ENCODE measurements at regions of chr7 and their contacts with region 1.

Region 1: GRCh38 chr7:143008007-143008901 is 18.7 kb downstream of the OR9A2 start:
- DNase-seq: peak; percentile 71 to 92 (median 89)
- ATAC-seq: peak; percentile 89 to 93
- H3K4me3 ChIP-seq: no peak overlapping the region
- H3K27ac ChIP-seq: no peak overlapping the region
- H3K4me1 ChIP-seq: no peaks in the 10 kb centered on the region
- H3K27me3 ChIP-seq: no peaks in the 10 kb centered on the region

Region 2: DNA sequence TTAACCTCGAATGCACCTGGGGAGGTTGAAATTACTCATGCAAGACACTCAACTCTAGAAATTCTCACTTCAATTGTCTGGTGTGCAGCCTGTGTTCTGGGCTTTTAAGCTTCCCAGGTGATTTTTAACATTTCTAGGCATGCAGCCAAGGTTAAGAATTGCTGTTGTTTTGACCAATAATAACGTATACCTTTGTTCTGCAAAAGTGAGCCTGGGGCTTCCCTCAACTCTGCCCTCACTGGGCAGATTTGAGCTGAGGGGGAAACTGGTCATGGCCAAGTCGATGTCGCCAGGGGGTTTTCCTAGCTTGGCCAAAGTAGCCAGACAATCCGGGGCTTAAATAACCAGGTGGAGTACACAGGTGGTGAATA is 236.9 kb before region 1 on chr7:
- intact Hi-C with region 1: no loop called
- DNase-seq: no peak
- ATAC-seq: no peak
- H3K4me3 ChIP-seq: no peak overlapping the region
- H3K27ac ChIP-seq: no peak overlapping the region
- H3K4me1 ChIP-seq: no peaks in the 10 kb centered on the region
- H3K27me3 ChIP-seq: no peaks in the 10 kb centered on the region

Region 3: GRCh38 chr7:142853739-142854371 is 154.4 kb before region 1 on chr7:
- intact Hi-C with region 1: loop called in 3 of 4 experiments (anchors 2 to 5 kb)
- DNase-seq: peak; percentile 62 to 82 (median 81)
- ATAC-seq: peak; percentile 74 to 81
- H3K4me3 ChIP-seq: peak overlapping the region; percentile 88
- H3K27ac ChIP-seq: peak overlapping the region; percentile 13
- H3K4me1 ChIP-seq: no peaks in the 10 kb centered on the region
- H3K27me3 ChIP-seq: no peaks in the 10 kb centered on the region